ENCODE measurements at regions of chr17 and their contacts with region 1.

Region 1: GRCh38 chr17:58121925-58122324 is 26.3 kb upstream of the OR4D1 start:
- DNase-seq: peak; percentile 17 to 60 (median 30)
- ATAC-seq: peak; percentile 75
- H3K4me3 ChIP-seq: no peak overlapping the region
- H3K27ac ChIP-seq: no peak overlapping the region
- H3K4me1 ChIP-seq: no peaks in the 10 kb centered on the region
- H3K27me3 ChIP-seq: peaks cover 2 to 4% of the 10 kb centered on the region in 2 experiments; a peak in 3 of 5 replicates
- CTCF ChIP-seq: peak; percentile 63 to 94 (median 87)
- EP300 ChIP-seq: no peak
- POLR2A ChIP-seq: no peak
- RAD21 ChIP-seq: peak; percentile 75 to 83

Region 2: GRCh38 chr17:57855391-57856035 is 266.4 kb before region 1 on chr17:
- CTCF ChIA-PET with region 1: no interaction called
- POLR2A ChIA-PET with region 1: no interaction called
- in situ Hi-C with region 1: loop called (anchors 5 kb)
- intact Hi-C with region 1: no loop called
- DNase-seq: no peak
- ATAC-seq: no peak
- H3K4me3 ChIP-seq: no peak overlapping the region
- H3K27ac ChIP-seq: no peak overlapping the region
- H3K4me1 ChIP-seq: peaks cover 25 to 41% of the 10 kb centered on the region in 2 experiments
- H3K27me3 ChIP-seq: peaks cover 0 to 4% of the 10 kb centered on the region in 2 experiments; a peak in 1 of 5 replicates
- CTCF ChIP-seq: no peak
- EP300 ChIP-seq: no peak
- POLR2A ChIP-seq: no peak
- RAD21 ChIP-seq: no peak

Region 3: DNA sequence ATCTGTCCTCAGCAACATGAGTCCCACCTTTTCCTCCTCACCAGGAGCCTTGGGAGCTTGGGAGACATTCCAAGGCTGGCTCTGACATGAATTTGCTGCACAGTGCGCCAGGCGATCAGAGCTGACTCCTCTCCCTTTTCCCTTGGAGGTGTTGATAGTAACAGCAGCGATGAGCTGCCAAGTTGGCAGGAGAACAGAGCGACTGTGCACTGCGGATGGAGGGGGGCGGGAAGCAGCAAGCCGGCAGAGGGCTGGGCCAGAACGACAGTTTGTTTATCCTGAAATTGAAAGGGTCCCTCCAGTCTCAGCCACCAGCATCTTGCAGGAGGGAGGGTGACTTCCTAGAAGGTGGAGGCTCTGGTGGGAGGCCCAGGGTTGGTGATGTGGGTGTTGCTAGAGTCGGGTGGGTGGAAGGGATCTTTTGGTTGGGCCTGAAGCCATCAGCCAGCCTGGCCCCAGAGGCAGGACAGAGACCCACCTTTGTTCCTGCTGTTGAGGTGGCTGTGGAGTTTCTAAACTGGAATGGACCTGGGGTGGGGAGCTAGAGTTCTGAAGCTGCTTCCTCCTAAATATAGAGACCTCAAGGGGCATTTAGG is 61.2 kb before region 1 on chr17:
- CTCF ChIA-PET with region 1: no interaction called
- POLR2A ChIA-PET with region 1: no interaction called
- in situ Hi-C with region 1: no loop called
- intact Hi-C with region 1: no loop called
- DNase-seq: no peak
- ATAC-seq: no peak; the same call in 2 of the 3 replicates
- H3K4me3 ChIP-seq: no peak overlapping the region
- H3K27ac ChIP-seq: no peak overlapping the region
- H3K4me1 ChIP-seq: no peaks in the 10 kb centered on the region
- H3K27me3 ChIP-seq: peaks cover 24 to 44% of the 10 kb centered on the region in 2 experiments
- CTCF ChIP-seq: no peak
- EP300 ChIP-seq: no peak
- POLR2A ChIP-seq: no peak
- RAD21 ChIP-seq: no peak

Region 4: GRCh38 chr17:58172369-58173071 is 50.6 kb after region 1 on chr17:
- CTCF ChIA-PET with region 1: no interaction called
- POLR2A ChIA-PET with region 1: no interaction called
- in situ Hi-C with region 1: loop called (anchors 5 kb)
- intact Hi-C with region 1: loop called (anchors 1 kb)
- DNase-seq: peak; percentile 35 to 41 (median 38)
- ATAC-seq: peak; percentile 73; the same call in 2 of the 3 replicates
- H3K4me3 ChIP-seq: no peak overlapping the region
- H3K27ac ChIP-seq: no peak overlapping the region
- H3K4me1 ChIP-seq: no peaks in the 10 kb centered on the region
- H3K27me3 ChIP-seq: peaks cover 21 to 26% of the 10 kb centered on the region in 2 experiments
- CTCF ChIP-seq: peak; percentile 60 to 69 (median 64)
- EP300 ChIP-seq: no peak
- POLR2A ChIP-seq: no peak
- RAD21 ChIP-seq: peak; percentile 52 to 73; a peak in 3 of 4 replicates

Region 5: DNA sequence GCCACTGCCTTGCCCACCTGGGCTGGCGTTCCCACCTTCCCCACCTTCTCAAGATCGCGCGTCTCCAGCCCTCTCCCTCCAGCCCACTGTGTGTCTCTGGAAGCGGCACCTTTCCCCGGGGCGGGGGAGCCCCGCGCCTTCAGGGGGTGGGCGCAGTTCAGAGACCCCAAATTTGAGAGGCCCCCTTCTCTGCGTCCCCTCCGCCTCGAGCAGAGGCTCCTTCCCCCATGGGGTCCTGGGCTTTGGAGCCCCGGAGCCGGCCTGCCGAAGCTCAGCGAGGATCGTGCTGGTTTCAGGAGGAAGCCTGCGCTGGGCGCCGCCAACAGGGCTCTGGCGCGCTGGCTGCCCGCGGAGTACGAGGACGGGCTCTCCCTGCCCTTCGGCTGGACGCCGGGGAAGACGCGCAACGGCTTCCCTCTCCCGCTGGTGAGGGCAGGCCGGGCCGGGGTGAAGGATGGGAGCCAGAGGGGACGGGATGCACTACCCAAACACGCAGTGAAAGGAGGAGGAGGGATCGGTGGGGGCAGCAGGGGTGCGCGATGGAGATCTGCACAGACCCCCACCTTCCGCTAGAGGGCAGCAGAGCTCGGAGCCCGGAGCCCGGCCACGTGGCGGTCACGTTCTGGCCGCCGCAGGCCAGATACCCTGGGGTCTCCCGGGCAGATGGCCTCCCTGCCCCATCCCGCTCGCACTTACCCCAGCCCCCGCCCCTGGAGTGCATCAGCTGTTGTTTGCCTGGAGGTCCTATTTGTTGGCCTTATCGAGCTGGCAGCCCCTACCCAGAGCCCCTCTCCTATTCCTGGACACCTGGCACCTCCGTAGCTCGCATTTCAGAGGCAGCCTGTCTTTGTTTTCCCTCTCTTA is 127.6 kb after region 1 on chr17:
- CTCF ChIA-PET with region 1: no interaction called
- POLR2A ChIA-PET with region 1: no interaction called
- in situ Hi-C with region 1: no loop called
- intact Hi-C with region 1: loop called (anchors 5 kb)
- DNase-seq: peak; percentile 80 to 96 (median 94)
- ATAC-seq: peak; percentile 91
- H3K4me3 ChIP-seq: no peak overlapping the region
- H3K27ac ChIP-seq: 0 out of 3 replicates have a peak overlapping the region, but pooled peaks have one; percentile 29
- H3K4me1 ChIP-seq: peaks cover 15 to 24% of the 10 kb centered on the region in 2 experiments
- H3K27me3 ChIP-seq: peaks cover 0 to 5% of the 10 kb centered on the region in 2 experiments; a peak in 1 of 5 replicates
- CTCF ChIP-seq: peak; percentile 79 to 88 (median 82)
- EP300 ChIP-seq: no peak
- POLR2A ChIP-seq: no peak
- RAD21 ChIP-seq: peak; percentile 49 to 63

Region 6: GRCh38 chr17:58452521-58453137 is 330.7 kb after region 1 on chr17:
- CTCF ChIA-PET with region 1: interaction called, 12 read pairs
- POLR2A ChIA-PET with region 1: no interaction called
- in situ Hi-C with region 1: loop called (anchors 10 kb)
- intact Hi-C with region 1: loop called (anchors 1 kb)
- DNase-seq: no peak
- ATAC-seq: no peak
- H3K4me3 ChIP-seq: no peak overlapping the region
- H3K27ac ChIP-seq: no peak overlapping the region
- H3K4me1 ChIP-seq: no peaks in the 10 kb centered on the region
- H3K27me3 ChIP-seq: no peaks in the 10 kb centered on the region
- CTCF ChIP-seq: no peak
- EP300 ChIP-seq: no peak
- POLR2A ChIP-seq: no peak
- RAD21 ChIP-seq: no peak

Measured in K562 (cell line).